HCT116 (cell line): ENCODE measurements at regions of chr6 and their contacts with region 1.

Region 1: GRCh38 chr6:130500693-130501092 is 134.9 kb downstream of the TMEM200A start:
- DNase-seq: no peak
- ATAC-seq: peak; percentile 86
- H3K4me3 ChIP-seq: 0 out of 4 replicates have a peak overlapping the region, but pooled peaks of 1 of the 2 experiments have one; percentile 17
- H3K27ac ChIP-seq: peak overlapping the region; percentile 58
- H3K4me1 ChIP-seq: peaks cover 6 to 14% of the 10 kb centered on the region in 2 experiments; a peak in 3 of 4 replicates
- H3K27me3 ChIP-seq: no peaks in the 10 kb centered on the region
- CTCF ChIP-seq: no peak
- POLR2A ChIP-seq: no peak
- RAD21 ChIP-seq: no peak

Region 2: DNA sequence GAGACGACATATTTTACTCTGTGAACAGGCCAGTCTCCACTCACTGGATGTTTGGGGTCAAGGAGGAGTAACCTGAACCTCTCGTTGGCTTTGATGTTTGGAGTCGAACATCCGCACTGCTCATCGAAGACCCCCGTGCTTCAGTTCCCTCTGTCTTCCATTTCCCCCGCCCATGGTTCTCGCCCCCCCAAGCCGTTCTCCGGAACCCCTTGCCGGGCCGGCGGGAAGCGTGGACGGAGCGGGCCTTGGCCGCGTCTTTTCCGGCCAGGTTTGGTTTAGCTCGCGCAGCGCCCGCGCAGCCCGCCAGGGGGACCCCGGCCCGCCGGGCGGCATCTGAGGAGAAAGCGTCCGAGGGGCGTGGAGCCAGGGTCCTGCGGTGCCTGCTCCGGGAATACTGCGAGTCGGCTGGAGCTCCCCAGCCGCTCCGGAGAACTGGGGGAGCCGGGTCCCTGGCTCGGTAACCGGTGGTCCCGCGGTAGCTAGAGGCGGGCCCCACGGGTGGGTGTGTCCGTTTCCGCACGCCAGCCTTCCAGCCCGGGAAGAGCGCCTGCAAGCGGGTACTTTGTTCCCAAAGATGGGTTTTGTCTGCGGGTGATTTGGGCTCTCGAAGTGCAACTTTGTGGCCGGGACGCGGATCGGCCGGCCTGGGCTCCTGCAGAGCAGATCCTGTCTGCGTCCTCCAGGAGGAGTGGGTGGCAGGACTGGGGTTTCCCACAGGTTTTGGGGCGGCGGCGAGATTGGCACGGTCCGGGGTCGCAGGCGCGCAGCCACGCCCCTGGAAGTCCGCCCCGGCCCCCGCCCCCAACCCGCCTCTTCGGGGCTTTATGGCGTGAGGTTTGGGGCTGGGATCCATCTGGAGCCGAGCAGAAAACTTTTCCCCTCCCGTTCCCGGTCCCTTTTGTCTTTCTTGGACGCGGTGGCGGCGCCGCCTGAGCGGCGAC is 135.3 kb before region 1 on chr6 and contains the start of gene TMEM200A:
- CTCF ChIA-PET with region 1: no interaction called
- POLR2A ChIA-PET with region 1: no interaction called
- RAD21 ChIA-PET with region 1: no interaction called
- intact Hi-C with region 1: loop called (anchors 10 kb)
- DNase-seq: peak; percentile 39
- ATAC-seq: peak; percentile 82
- H3K4me3 ChIP-seq: peak within 1 kb of the TSS; percentile 61 to 74
- H3K27ac ChIP-seq: peak within 1 kb of the TSS; percentile 57
- H3K4me1 ChIP-seq: peaks cover 0 to 23% of the 10 kb centered on the region in 2 experiments; a peak in 1 of 4 replicates
- H3K27me3 ChIP-seq: no peaks in the 10 kb centered on the region
- CTCF ChIP-seq: peak; percentile 70 to 85 (median 76)
- POLR2A ChIP-seq: no peak
- RAD21 ChIP-seq: peak; percentile 64
- total RNA-seq, gene TMEM200A: 22.9 TPM

Region 3: GRCh38 chr6:130537447-130537846 is 36.8 kb after region 1 on chr6:
- CTCF ChIA-PET with region 1: no interaction called
- POLR2A ChIA-PET with region 1: no interaction called
- RAD21 ChIA-PET with region 1: no interaction called
- intact Hi-C with region 1: no loop called
- DNase-seq: no peak
- ATAC-seq: no peak
- H3K4me3 ChIP-seq: no peak overlapping the region
- H3K27ac ChIP-seq: no peak overlapping the region
- H3K4me1 ChIP-seq: no peaks in the 10 kb centered on the region
- H3K27me3 ChIP-seq: no peaks in the 10 kb centered on the region
- CTCF ChIP-seq: no peak
- POLR2A ChIP-seq: no peak
- RAD21 ChIP-seq: no peak

Region 4: DNA sequence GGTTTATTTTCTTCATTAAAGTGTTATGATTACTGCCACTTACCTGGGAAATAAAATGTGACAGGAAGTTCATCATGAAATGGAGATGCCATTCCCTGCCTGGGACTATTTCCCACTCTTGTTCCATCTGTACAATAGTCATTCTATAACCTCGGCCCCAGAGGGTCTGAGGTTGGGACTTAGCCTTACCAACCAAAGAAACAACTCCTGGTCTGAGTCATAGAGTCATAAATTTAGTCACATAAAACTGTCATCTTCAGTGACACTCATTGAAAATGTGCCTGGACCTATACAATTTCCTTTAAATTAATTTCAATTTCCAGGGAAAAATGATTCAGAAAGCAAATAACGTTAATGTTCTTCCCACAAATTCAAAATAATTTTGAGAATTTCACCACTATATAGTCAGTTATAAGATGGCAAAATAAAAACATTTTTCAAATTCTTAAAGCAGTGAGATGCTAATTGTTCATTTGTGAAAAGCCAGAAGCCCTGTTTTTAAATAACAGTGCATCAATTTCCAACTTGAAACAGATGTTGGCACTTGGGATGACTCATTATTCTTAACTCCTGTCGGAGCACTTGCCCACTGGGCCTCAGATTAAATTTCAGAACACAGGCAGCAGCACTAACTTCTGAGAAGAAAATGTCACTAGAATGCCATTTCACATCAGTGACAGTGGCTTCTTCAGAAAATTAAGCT is 125.3 kb after region 1 on chr6:
- CTCF ChIA-PET with region 1: no interaction called
- POLR2A ChIA-PET with region 1: no interaction called
- RAD21 ChIA-PET with region 1: no interaction called
- intact Hi-C with region 1: loop called (anchors 5 kb)
- DNase-seq: peak; percentile 71
- ATAC-seq: peak; percentile 94
- H3K4me3 ChIP-seq: peak overlapping the region in 1 of 2 experiments; percentile 12; a peak in 1 of 4 replicates
- H3K27ac ChIP-seq: peak overlapping the region; percentile 79
- H3K4me1 ChIP-seq: peaks cover 14 to 24% of the 10 kb centered on the region in 2 experiments
- H3K27me3 ChIP-seq: no peaks in the 10 kb centered on the region
- CTCF ChIP-seq: no peak
- POLR2A ChIP-seq: no peak
- RAD21 ChIP-seq: no peak